ENCODE measurements at regions of chr4 and their contacts with region 1.

Region 1: GRCh38 chr4:7295911-7296660 is 103.7 kb downstream of the SORCS2 start:
- DNase-seq: peak; percentile 51
- H3K4me3 ChIP-seq: no peak overlapping the region
- H3K27ac ChIP-seq: no peak overlapping the region
- H3K4me1 ChIP-seq: peaks cover 6% of the 10 kb centered on the region
- H3K27me3 ChIP-seq: no peaks in the 10 kb centered on the region
- CTCF ChIP-seq: peak in 2 of 3 experiments; percentile 39 to 54
- POLR2A ChIP-seq: no peak

Region 2: GRCh38 chr4:6640292-6641163 is 655.6 kb before region 1 on chr4 and contains the start of gene MRFAP1:
- intact Hi-C with region 1: no loop called
- DNase-seq: peak; percentile 97
- H3K4me3 ChIP-seq: peak within 1 kb of the TSS; percentile 84 to 85
- H3K27ac ChIP-seq: peak within 1 kb of the TSS; percentile 95 to 97
- H3K4me1 ChIP-seq: peaks cover 24% of the 10 kb centered on the region
- H3K27me3 ChIP-seq: no peaks in the 10 kb centered on the region
- CTCF ChIP-seq: no peak
- POLR2A ChIP-seq: peak; percentile 47
- total RNA-seq, gene MRFAP1: 289 to 308 TPM

Region 3: DNA sequence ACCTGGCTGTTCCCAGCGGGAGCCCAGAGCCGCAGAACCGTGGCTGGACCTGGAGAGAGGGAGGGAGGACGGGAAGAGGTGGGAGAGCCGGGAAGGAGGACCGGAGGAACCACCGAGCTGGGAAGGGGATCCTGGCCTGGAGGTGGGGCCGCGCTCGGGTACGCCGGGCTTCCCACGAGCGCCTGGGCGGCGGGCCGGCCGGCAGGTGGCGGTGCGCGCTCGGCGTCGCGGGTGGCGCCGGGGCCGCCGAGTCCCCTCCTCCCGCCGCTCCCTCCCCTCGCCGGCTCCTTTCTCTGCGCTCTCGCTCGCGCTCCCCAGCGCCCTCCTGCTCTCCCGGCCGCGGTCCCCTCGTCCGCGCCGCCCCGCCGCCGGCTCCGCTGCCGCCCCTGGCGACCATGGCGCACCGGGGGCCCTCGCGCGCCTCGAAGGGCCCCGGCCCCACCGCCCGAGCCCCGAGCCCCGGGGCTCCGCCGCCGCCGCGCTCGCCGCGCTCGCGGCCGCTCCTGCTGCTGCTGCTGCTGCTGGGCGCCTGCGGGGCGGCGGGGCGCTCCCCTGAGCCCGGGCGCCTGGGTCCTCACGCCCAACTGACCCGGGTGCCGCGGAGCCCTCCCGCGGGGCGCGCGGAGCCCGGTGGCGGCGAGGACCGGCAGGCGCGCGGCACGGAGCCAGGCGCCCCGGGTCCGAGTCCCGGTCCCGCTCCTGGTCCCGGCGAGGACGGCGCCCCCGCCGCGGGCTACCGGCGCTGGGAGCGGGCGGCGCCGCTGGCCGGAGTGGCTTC is 103.6 kb before region 1 on chr4 and contains the start of gene SORCS2:
- intact Hi-C with region 1: loop called (anchors 10 kb)
- DNase-seq: peak; percentile 65
- H3K4me3 ChIP-seq: peak within 1 kb of the TSS; percentile 32 to 53
- H3K27ac ChIP-seq: peak within 1 kb of the TSS in 1 of 2 donors; percentile 50
- H3K4me1 ChIP-seq: peaks cover 14% of the 10 kb centered on the region
- H3K27me3 ChIP-seq: no peaks in the 10 kb centered on the region
- CTCF ChIP-seq: peak; percentile 61 to 90 (median 78)
- POLR2A ChIP-seq: no peak
- total RNA-seq, gene SORCS2: 2.7 to 2.9 TPM

Measured in testis (tissue), 5 donors.